HepG2 (cell line): ENCODE measurements at regions of chr2 and their contacts with region 1.

Region 1: DNA sequence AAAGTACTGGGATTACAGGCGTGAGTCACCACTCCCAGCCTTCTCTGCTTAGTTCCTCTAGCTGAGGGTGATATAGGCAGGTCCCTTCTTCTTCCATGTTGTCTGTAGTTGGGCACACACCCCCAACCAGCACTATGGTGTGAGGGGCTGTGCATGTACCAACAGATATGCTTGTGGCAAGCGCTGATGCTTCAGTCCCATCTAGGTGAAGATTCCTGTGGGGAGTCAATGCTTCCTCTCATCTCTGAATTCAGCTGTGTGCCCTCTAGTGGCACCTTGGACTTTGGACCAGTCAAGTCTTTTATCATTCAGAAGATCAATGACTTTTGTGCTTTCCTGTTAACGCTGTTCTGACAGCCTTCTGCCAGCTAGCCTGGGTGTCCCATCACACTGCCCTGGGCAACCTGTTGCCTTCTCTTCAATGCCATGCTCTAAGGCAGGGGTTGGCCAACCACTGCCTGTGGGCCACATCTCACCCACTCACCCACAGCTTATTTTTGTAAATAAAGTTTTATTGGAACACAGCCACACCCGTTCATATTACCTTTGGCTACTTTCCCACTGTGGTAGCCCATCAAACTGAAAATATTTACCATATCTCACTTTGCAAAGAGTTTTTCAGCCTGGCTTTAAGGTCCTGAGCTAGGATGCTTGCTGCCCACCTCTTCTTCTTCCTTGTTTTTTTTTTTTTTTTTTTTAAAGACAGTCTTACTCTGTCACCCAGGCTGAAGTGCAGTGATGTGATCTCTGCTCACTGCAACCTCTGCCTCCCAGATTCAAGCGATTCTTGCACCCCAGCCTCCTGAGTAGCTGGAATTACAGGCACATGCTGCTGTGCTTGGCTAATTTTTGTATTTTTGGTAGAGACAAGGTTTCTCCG is 51.0 kb downstream of the NPAS2 start:
- DNase-seq: peak; percentile 80
- ATAC-seq: peak; percentile 66
- H3K4me3 ChIP-seq: no peak overlapping the region
- H3K27ac ChIP-seq: peak overlapping the region; percentile 24
- H3K4me1 ChIP-seq: peaks cover 56% of the 10 kb centered on the region
- H3K27me3 ChIP-seq: no peaks in the 10 kb centered on the region
- CTCF ChIP-seq: peak; percentile 62
- EP300 ChIP-seq: peak in 1 of 2 experiments; percentile 31; a peak in 1 of 4 replicates
- POLR2A ChIP-seq: no peak
- RAD21 ChIP-seq: peak; percentile 46; the same call in 1 of the 2 replicates

Region 2: GRCh38 chr2:100818606-100819369 is 52.1 kb before region 1 on chr2:
- CTCF ChIA-PET with region 1: no interaction called
- POLR2A ChIA-PET with region 1: interaction called, 5 read pairs
- in situ Hi-C with region 1: no loop called
- intact Hi-C with region 1: loop called (anchors 2 kb)
- DNase-seq: peak; percentile 78
- ATAC-seq: peak; percentile 71
- H3K4me3 ChIP-seq: peak overlapping the region; percentile 76 to 96 (median 87)
- H3K27ac ChIP-seq: peak overlapping the region; percentile 65
- H3K4me1 ChIP-seq: peaks cover 71% of the 10 kb centered on the region
- H3K27me3 ChIP-seq: no peaks in the 10 kb centered on the region; a peak in 1 of 5 replicates
- CTCF ChIP-seq: peak; percentile 81
- EP300 ChIP-seq: no peak; a peak in 1 of 4 replicates
- POLR2A ChIP-seq: peak; percentile 69 to 70
- RAD21 ChIP-seq: peak; percentile 85

Region 3: DNA sequence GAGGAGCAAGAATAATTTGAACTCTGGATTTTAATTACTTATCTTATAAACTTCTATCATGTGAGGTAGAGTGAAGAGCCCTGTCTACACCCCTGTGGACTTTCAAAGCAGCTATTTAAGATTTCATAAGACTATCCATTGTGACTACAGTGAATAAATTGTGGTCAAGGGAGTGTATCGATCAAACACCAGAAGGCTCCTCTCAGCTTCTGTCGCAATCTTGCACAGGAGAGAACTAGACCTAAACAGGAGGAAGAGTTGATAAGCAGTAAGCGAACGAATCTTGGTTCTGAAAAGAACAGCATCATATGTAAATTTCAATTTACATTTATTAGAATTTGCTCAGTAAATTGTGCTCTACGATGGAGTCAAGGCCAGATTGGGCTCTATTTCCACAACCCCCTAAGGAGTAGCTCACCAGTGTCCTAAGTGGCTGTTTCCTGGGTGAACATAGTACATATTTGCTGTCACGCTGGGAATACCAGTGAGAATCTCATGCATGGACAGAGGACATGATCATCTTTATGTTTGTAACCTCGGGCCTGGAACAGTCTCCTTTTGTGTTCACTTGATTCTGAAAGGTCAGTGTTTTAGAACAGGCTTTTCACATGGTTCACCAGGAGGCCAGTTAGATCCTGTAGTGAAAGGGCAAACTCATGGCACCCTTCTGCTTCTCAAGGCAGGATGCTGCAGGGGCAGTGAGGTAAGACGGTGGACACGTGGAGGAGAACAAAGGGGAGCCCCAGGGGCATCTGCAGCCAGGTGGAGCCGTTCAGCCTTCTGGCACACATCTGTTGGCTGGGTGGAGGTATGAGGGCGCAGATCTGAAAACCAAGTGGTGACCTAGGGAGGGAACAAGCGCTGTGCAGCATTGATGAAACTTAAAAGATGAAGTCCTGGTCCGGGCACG is 17.6 kb before region 1 on chr2:
- CTCF ChIA-PET with region 1: no interaction called
- POLR2A ChIA-PET with region 1: interaction called, 3 read pairs
- in situ Hi-C with region 1: no loop called
- intact Hi-C with region 1: loop called (anchors 2 kb)
- DNase-seq: peak; percentile 52
- ATAC-seq: peak; percentile 55
- H3K4me3 ChIP-seq: no peak overlapping the region
- H3K27ac ChIP-seq: peak overlapping the region; percentile 39
- H3K4me1 ChIP-seq: peaks cover 35% of the 10 kb centered on the region
- H3K27me3 ChIP-seq: no peaks in the 10 kb centered on the region
- CTCF ChIP-seq: peak; percentile 48
- EP300 ChIP-seq: no peak
- POLR2A ChIP-seq: no peak
- RAD21 ChIP-seq: no peak

Region 4: DNA sequence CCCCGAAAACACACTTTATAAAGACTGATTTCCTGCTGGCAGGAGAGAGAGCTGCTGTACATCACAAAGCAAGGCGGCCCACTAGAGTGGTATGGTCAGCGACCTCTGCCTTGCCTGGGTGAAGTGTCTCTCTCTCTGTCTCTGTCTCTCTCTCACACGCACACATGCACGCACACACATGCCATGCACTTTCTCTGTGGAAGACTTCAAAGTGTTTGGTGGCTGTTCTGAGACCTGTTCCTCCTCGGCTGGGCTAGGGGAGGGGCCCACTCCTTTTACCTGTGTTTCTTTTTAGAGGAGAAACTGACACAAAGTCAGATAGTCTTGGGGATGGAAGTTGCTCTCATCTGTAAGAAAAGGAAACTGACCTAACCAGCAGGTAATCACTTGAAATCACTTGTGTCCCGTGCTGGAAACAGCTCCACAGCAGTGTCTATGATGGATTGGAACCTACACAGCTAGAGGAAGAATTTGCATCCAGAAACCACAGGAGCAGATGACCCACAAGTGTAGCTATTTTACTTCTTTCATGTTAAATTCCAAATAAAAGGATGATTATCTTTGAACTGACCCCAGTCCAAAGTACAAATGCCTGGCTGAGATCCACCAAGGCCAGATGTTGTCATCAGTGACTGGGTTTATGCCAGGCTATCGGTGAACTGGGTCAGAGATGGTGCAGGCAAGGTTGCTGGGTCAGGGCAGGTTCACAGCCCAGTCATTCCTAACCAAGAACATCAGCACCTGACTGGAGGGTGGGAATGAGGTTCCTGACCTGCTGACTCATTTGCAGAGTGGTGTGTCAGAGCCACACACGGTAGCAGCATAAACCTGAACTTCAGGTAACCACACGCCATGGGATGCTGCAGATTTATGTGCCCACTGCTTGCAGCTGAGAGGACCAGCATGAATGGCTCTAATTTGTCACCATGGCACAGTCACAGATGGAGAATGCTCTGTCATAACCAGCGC is 12.0 kb after region 1 on chr2:
- CTCF ChIA-PET with region 1: no interaction called
- POLR2A ChIA-PET with region 1: interaction called, 11 read pairs
- in situ Hi-C with region 1: no loop called
- intact Hi-C with region 1: no loop called
- DNase-seq: peak; percentile 96
- ATAC-seq: peak; percentile 89
- H3K4me3 ChIP-seq: no peak overlapping the region
- H3K27ac ChIP-seq: peak overlapping the region; percentile 83
- H3K4me1 ChIP-seq: peaks cover 73% of the 10 kb centered on the region
- H3K27me3 ChIP-seq: no peaks in the 10 kb centered on the region
- CTCF ChIP-seq: no peak
- EP300 ChIP-seq: peak; percentile 82 to 90
- POLR2A ChIP-seq: peak in 1 of 2 experiments; percentile 33; a peak in 1 of 4 replicates
- RAD21 ChIP-seq: no peak

Region 5: DNA sequence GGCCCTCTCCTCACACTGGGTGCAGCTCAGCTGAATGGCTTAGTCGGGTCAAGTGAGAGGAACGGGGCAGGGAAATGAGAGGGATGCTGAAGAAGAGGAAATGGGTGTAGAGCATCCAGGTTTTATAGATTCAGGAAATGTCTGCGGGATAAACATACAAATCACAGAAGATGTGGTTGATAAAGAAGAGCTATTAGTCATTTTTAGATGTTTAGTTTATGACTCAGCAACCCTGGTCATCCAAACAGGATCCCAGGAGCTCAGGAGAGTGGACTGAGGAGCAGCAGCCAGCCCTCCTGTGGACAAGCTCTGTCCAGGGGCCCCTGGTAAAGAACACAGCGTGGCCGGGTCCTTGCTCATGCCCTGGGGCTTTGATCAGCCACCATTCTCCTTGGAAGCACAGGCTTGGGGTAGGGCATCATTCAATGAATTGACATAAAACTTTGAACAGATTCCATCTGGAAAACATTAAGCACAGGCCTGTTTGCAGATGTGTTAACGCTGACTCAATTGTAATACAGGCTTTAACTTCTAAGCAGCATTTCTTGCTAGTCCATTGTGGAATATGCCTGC is 32.0 kb after region 1 on chr2:
- CTCF ChIA-PET with region 1: no interaction called
- POLR2A ChIA-PET with region 1: interaction called, 12 read pairs
- in situ Hi-C with region 1: no loop called
- intact Hi-C with region 1: no loop called
- DNase-seq: peak; percentile 81
- ATAC-seq: peak; percentile 90
- H3K4me3 ChIP-seq: no peak overlapping the region
- H3K27ac ChIP-seq: no peak overlapping the region
- H3K4me1 ChIP-seq: peaks cover 25% of the 10 kb centered on the region
- H3K27me3 ChIP-seq: no peaks in the 10 kb centered on the region
- CTCF ChIP-seq: 0 out of 2 replicates have a peak, but pooled peaks have one; percentile 14
- EP300 ChIP-seq: peak in 1 of 2 experiments; percentile 21; a peak in 1 of 4 replicates
- POLR2A ChIP-seq: no peak
- RAD21 ChIP-seq: peak; percentile 30; the same call in 1 of the 2 replicates

Region 6: DNA sequence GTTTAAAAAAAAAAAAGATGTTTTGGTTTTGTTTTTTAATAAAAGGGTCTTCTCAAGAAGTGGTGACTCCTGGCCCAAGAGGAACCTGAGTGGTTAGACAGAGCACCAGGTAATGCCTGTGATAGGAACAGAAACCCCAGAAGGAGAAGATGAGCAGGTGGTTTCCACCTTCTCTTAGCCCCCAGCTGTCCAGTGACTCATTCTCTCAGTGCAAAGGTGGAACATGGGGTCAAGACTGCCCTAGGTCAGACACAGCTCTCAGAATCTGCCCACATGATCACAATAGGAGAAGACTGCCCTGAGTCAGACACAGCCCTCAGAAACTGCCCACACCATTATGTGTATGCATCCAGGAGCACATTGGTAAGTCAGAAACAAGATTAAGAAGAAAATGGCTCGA is 218.5 kb after region 1 on chr2:
- CTCF ChIA-PET with region 1: no interaction called
- POLR2A ChIA-PET with region 1: no interaction called
- in situ Hi-C with region 1: no loop called
- intact Hi-C with region 1: no loop called
- DNase-seq: no peak
- ATAC-seq: no peak
- H3K4me3 ChIP-seq: no peak overlapping the region
- H3K27ac ChIP-seq: no peak overlapping the region
- H3K4me1 ChIP-seq: peaks cover 48% of the 10 kb centered on the region
- H3K27me3 ChIP-seq: no peaks in the 10 kb centered on the region
- CTCF ChIP-seq: no peak
- EP300 ChIP-seq: no peak
- POLR2A ChIP-seq: no peak
- RAD21 ChIP-seq: no peak

Region 7: DNA sequence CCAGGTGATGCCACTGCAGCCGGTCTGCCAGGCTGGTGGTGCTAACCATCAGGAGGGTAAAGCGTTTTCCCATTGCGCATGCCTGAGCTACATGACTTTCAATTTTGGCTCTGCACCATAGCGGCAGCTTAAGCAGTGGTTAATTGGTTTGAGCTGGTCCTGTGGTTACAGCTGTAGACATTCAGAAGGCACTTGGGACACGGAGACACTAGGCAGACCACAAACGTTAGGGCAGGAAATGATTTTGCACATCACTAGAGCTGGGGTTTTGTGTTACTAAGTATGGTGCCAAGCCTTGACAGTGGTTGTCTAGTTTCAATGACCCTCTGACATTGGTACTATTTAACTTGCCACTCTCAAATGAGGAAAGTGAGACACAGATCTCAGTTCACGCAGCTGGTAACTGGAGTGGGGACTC is 352.9 kb after region 1 on chr2:
- CTCF ChIA-PET with region 1: no interaction called
- POLR2A ChIA-PET with region 1: no interaction called
- in situ Hi-C with region 1: no loop called
- intact Hi-C with region 1: no loop called
- DNase-seq: no peak
- ATAC-seq: no peak
- H3K4me3 ChIP-seq: no peak overlapping the region
- H3K27ac ChIP-seq: no peak overlapping the region
- H3K4me1 ChIP-seq: peaks cover 9% of the 10 kb centered on the region
- H3K27me3 ChIP-seq: no peaks in the 10 kb centered on the region
- CTCF ChIP-seq: no peak
- EP300 ChIP-seq: no peak
- POLR2A ChIP-seq: no peak
- RAD21 ChIP-seq: no peak